A673 (cell line): ENCODE measurements at regions of chr22 and their contacts with region 1.

Region 1: GRCh38 chr22:36968249-36968964 is 50.8 kb downstream of the TST start:
- DNase-seq: no peak
- H3K4me3 ChIP-seq: no peak overlapping the region
- H3K27ac ChIP-seq: no peak overlapping the region
- H3K4me1 ChIP-seq: no peaks in the 10 kb centered on the region
- H3K27me3 ChIP-seq: peaks cover 2% of the 10 kb centered on the region
- CTCF ChIP-seq: no peak

Region 2: DNA sequence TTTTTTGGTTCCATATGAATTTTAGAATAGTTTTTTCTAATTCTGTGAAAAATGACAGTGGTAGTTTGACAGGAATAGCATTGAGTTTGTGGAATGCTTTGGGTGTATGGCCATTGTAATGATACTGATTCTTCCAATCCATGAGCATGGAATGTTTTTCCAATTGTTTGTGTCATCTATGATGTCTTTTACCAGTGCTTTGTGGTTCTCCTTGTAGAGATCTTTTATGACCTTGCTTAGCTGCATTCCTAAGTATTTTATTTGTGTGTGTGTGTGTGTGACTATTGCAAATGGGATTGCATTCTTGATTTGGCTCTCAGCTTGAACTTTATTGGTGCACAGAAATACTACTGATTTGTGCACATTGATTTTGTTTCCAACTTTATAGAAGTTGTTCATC is 57.9 kb before region 1 on chr22:
- CTCF ChIA-PET with region 1: interaction called, 26 read pairs
- POLR2A ChIA-PET with region 1: no interaction called
- intact Hi-C with region 1: no loop called
- DNase-seq: no peak
- H3K4me3 ChIP-seq: no peak overlapping the region
- H3K27ac ChIP-seq: no peak overlapping the region
- H3K4me1 ChIP-seq: no peaks in the 10 kb centered on the region
- H3K27me3 ChIP-seq: peaks cover 28% of the 10 kb centered on the region
- CTCF ChIP-seq: no peak